Panc1 (cell line): ENCODE measurements at regions of chr15 and their contacts with region 1.

Region 1: DNA sequence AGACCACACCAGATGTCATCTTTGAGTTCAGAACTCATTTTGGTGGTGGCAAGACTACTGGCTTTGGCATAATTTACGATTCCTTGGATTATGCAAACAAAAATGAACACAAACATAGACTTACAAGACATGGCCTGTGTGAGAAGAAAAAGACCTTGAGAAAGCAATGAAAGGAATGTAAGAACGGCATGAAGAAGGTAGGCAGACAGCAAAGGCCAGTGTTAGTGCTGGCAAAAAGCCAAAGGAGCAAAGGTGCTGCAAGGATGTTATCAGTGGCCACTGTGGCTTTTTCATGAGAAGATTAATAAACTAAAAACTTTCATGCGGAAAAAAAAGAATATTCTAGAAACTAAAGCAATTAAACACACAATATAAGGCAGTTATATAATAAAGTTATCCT is 21.9 kb downstream of the AAGAB start:
- DNase-seq: no peak
- ATAC-seq: no peak
- H3K4me3 ChIP-seq: no peak overlapping the region
- H3K27ac ChIP-seq: no peak overlapping the region
- H3K4me1 ChIP-seq: no peaks in the 10 kb centered on the region
- H3K27me3 ChIP-seq: no peaks in the 10 kb centered on the region
- CTCF ChIP-seq: no peak

Region 2: DNA sequence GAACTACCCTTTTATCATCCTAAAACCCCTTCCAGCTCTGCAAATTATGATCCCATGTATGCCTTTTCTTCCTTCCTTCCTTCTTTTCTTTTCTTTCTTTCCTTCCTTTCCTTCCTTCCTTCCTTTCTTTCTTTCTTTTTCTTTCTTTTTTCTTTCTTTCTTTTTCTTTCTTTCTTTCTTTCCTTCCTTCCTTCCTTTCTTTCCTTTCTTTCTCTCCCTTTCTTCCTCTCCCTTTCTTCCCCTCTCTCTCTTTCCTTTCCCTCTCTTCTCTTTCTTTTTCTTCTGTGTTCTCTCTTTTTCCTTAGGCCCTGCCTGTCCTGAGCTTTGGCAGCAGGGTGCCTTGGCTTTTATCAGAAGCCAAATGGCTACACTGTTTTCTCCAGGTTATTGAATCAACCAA is 88.8 kb after region 1 on chr15:
- CTCF ChIA-PET with region 1: no interaction called
- POLR2A ChIA-PET with region 1: interaction called, 10 read pairs
- in situ Hi-C with region 1: no loop called
- intact Hi-C with region 1: no loop called
- DNase-seq: no peak
- ATAC-seq: no peak
- H3K4me3 ChIP-seq: no peak overlapping the region
- H3K27ac ChIP-seq: no peak overlapping the region
- H3K4me1 ChIP-seq: no peaks in the 10 kb centered on the region
- H3K27me3 ChIP-seq: no peaks in the 10 kb centered on the region
- CTCF ChIP-seq: no peak